AG04449 (cell line): ENCODE measurements at regions of chr3 and their contacts with region 1.

Region 1: GRCh38 chr3:30693470-30694120 is 87.2 kb downstream of the TGFBR2 start:
- DNase-seq: no peak
- H3K4me3 ChIP-seq: no peak overlapping the region
- CTCF ChIP-seq: peak; percentile 72

Region 2: GRCh38 chr3:30112902-30113484 is 580.6 kb before region 1 on chr3:
- CTCF ChIA-PET with region 1: interaction called, 32 read pairs
- POLR2A ChIA-PET with region 1: interaction called, 5 read pairs
- DNase-seq: peak; percentile 21
- H3K4me3 ChIP-seq: no peak overlapping the region
- CTCF ChIP-seq: peak; percentile 32

Region 3: DNA sequence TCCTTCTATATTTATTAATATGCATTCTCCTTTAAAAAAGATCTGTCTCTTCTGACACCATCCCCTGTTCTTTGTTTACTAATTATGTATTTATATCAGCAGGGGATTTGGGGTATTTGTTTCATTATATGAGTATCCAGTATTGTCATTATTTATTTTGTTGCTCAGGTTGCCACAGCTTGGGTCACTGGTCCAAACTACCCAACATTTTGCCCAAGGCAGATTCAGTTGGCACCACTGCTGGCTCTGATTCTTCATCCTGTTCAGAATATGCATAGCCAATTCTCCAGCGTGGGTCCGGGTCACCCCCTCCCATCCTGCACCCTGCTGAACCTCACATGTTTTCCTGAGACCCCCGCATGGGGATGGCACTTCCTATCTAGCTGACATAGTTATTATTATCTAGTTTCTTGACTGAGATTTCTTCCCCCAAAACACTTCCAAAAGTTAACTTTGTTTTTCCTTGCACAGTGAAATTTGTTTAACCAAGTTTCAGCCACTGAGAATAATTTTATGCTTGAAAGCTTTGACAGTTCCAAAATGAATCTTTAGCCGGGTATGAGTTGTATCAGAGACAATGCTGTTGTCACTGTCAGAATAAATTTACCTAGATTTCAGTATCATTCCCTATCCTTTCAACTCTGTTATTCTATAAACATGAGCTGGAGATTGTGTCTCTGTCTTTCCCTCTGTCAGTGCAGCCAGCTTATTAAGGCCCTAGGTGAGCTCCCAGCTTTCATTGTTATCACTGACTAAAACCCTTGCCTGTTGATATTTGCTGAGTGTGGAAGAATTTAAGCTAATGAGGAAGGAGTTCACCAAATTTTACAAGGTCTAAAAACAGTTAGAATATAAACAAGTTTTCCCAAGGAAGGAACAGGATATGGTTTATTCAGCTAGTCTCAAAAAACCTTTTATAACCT is 16.9 kb before region 1 on chr3:
- CTCF ChIA-PET with region 1: interaction called, 15 read pairs
- POLR2A ChIA-PET with region 1: no interaction called
- DNase-seq: no peak
- H3K4me3 ChIP-seq: no peak overlapping the region
- CTCF ChIP-seq: no peak

Region 4: GRCh38 chr3:30681643-30682211 is 11.9 kb before region 1 on chr3:
- CTCF ChIA-PET with region 1: interaction called, 15 read pairs
- POLR2A ChIA-PET with region 1: no interaction called
- DNase-seq: no peak
- H3K4me3 ChIP-seq: no peak overlapping the region
- CTCF ChIP-seq: no peak

Region 5: GRCh38 chr3:30708472-30708871 is 14.9 kb after region 1 on chr3:
- CTCF ChIA-PET with region 1: interaction called, 22 read pairs
- POLR2A ChIA-PET with region 1: no interaction called
- DNase-seq: no peak
- H3K4me3 ChIP-seq: no peak overlapping the region
- CTCF ChIP-seq: no peak